Activated CD4-positive, alpha-beta memory T cell treated with anti-CD3 and anti-CD28 coated beads for 36 hours (primary cell): ENCODE measurements at regions of chr17 and their contacts with region 1.

Region 1: GRCh38 chr17:4420692-4421131 is 13.0 kb upstream of the SPNS3 start:
- DNase-seq: peak; percentile 68
- H3K4me3 Mint-ChIP-seq: no peak overlapping the region
- H3K27ac Mint-ChIP-seq: no peak overlapping the region
- H3K4me1 Mint-ChIP-seq: peaks cover 3% of the 10 kb centered on the region
- H3K27me3 Mint-ChIP-seq: no peaks in the 10 kb centered on the region

Region 2: GRCh38 chr17:4199818-4200402 is 220.8 kb before region 1 on chr17:
- CTCF ChIA-PET with region 1: interaction called, 17 read pairs
- POLR2A ChIA-PET with region 1: no interaction called
- intact Hi-C with region 1: no loop called
- DNase-seq: peak; percentile 45
- H3K4me3 Mint-ChIP-seq: no peak overlapping the region
- H3K27ac Mint-ChIP-seq: no peak overlapping the region
- H3K4me1 Mint-ChIP-seq: peaks cover 13% of the 10 kb centered on the region
- H3K27me3 Mint-ChIP-seq: no peaks in the 10 kb centered on the region

Region 3: DNA sequence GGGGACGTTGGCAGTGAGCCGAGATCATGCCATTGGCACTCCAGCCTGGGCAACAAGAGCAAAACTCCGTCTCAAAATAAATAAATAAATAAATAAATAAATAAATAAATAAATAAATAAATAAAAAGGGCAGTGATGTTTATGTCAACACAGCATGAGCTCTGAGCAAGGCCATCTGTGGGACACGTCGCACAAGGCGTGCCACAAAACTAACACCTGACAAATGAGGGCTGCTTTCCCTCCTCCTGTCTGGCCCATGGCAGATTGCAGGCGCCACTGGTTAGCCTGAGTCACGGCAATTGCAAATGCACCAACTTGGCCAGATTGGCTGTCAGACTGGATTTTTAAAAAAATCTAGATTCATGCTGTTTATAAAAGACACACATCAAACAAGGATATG is 12.9 kb before region 1 on chr17:
- CTCF ChIA-PET with region 1: interaction called, 19 read pairs
- POLR2A ChIA-PET with region 1: no interaction called
- intact Hi-C with region 1: no loop called
- DNase-seq: no peak
- H3K4me3 Mint-ChIP-seq: no peak overlapping the region
- H3K27ac Mint-ChIP-seq: no peak overlapping the region
- H3K4me1 Mint-ChIP-seq: peaks cover 1% of the 10 kb centered on the region
- H3K27me3 Mint-ChIP-seq: no peaks in the 10 kb centered on the region

Region 4: GRCh38 chr17:4625181-4625617 is 204.5 kb after region 1 on chr17:
- CTCF ChIA-PET with region 1: interaction called, 37 read pairs
- POLR2A ChIA-PET with region 1: no interaction called
- intact Hi-C with region 1: loop called (anchors 5 kb)
- DNase-seq: no peak
- H3K4me3 Mint-ChIP-seq: no peak overlapping the region
- H3K27ac Mint-ChIP-seq: no peak overlapping the region
- H3K4me1 Mint-ChIP-seq: no peaks in the 10 kb centered on the region
- H3K27me3 Mint-ChIP-seq: peaks cover 15% of the 10 kb centered on the region